K562 (cell line): ENCODE measurements at regions of chr9 and their contacts with region 1.

Region 1: DNA sequence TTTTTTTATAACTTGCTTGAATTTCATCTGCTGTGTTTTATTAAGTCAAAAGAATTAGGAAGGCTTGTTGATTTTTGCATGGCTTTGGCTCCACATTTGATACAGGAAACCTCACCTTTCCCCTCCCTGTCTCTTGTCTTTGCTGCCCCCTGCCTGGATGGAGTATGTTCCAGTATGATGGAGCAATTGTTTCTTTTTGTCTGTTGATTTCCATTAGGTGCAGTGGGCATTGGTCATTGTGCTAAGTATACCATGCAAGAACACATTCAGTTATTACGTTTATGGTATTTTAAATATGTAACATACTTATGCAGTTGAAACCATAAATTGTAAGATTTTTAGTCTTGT is 19.6 kb downstream of the TJP2 start:
- DNase-seq: peak in 2 of 4 experiments; percentile 31 to 44
- ATAC-seq: peak; percentile 75
- H3K4me3 ChIP-seq: no peak overlapping the region
- H3K27ac ChIP-seq: no peak overlapping the region
- H3K4me1 ChIP-seq: peaks cover 4 to 31% of the 10 kb centered on the region in 2 experiments; a peak in 4 of 5 replicates
- H3K27me3 ChIP-seq: no peaks in the 10 kb centered on the region
- CTCF ChIP-seq: peak in 2 of 3 experiments; percentile 34 to 50; a peak in 4 of 6 replicates
- EP300 ChIP-seq: no peak
- POLR2A ChIP-seq: no peak
- RAD21 ChIP-seq: peak; percentile 24 to 68

Region 2: DNA sequence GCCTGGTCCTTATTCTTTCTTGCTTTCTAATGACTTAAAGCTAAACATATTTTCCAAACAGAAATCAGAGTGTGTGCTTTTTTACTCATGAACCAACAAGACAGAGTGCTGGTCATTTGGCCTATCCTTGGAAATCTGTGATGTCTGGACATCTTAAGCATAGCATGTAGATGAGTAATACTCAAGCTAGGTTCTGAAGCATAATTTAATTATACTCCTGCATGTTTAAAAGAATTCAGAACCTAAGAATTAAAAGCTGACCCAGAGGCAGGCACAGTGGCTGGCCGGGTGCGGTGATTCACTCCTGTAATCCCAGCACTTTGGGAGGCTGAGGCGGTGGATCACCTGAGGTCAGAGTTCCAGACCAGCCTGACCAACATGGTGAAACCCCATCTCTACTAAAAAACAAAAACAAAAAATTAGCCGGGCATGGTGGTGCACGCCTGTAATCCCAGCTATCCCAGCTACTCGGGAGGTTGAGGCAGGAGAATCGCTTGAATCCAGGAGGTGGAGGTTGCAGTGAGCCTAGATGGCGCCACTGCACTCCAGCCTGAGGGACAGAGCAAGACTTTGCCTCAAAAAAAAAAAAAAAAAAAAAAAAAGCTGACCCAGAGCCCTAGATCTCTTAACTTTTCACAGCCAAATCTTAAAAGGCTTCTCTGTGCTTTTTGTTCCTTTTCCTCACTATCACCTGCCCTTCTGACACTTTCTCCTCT is 35.8 kb before region 1 on chr9:
- CTCF ChIA-PET with region 1: no interaction called
- POLR2A ChIA-PET with region 1: no interaction called
- in situ Hi-C with region 1: no loop called
- intact Hi-C with region 1: loop called (anchors 1 kb)
- DNase-seq: no peak
- ATAC-seq: peak; percentile 35; the same call in 1 of the 3 replicates
- H3K4me3 ChIP-seq: no peak overlapping the region
- H3K27ac ChIP-seq: no peak overlapping the region
- H3K4me1 ChIP-seq: no peaks in the 10 kb centered on the region; a peak in 1 of 5 replicates
- H3K27me3 ChIP-seq: no peaks in the 10 kb centered on the region
- CTCF ChIP-seq: peak in 2 of 3 experiments; percentile 32 to 37; a peak in 3 of 6 replicates
- EP300 ChIP-seq: no peak
- POLR2A ChIP-seq: no peak
- RAD21 ChIP-seq: peak in 1 of 2 experiments; percentile 30; a peak in 2 of 4 replicates